IMR-90 (cell line): ENCODE measurements at regions of chr1 and their contacts with region 1.

Region 1: GRCh38 chr1:246497331-246497915 is 9.7 kb downstream of the SMYD3 start:
- DNase-seq: peak; percentile 79
- ATAC-seq: peak; percentile 57
- H3K4me3 ChIP-seq: no peak overlapping the region
- H3K27ac ChIP-seq: no peak overlapping the region
- H3K4me1 ChIP-seq: peaks cover 6% of the 10 kb centered on the region
- H3K27me3 ChIP-seq: no peaks in the 10 kb centered on the region
- CTCF ChIP-seq: peak; percentile 82
- POLR2A ChIP-seq: no peak
- RAD21 ChIP-seq: peak; percentile 62

Region 2: DNA sequence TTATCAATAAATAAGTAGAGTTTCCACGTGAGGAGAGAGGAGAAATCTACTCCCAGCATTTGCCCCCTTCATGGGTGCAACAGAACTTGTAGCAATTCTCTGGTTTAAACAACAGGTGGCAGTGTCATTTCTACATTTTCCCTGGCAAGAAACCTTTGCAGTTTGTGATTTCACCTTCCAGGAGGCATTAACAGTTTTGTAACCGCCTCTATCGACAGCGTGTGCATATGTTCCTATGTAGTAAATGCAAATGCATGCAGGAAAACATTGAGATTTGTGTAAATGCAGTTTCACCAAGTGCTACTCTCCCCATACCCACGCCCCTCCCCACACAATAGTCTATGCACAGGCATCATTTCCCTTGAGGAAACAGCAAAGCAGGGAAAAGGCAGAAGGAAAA is 485.1 kb before region 1 on chr1:
- CTCF ChIA-PET with region 1: interaction called, 8 read pairs
- POLR2A ChIA-PET with region 1: no interaction called
- dilution Hi-C with region 1: no loop called
- in situ Hi-C with region 1: no loop called
- intact Hi-C with region 1: loop called (anchors 2 kb)
- DNase-seq: peak; percentile 51
- ATAC-seq: peak; percentile 53
- H3K4me3 ChIP-seq: no peak overlapping the region
- H3K27ac ChIP-seq: no peak overlapping the region
- H3K4me1 ChIP-seq: no peaks in the 10 kb centered on the region
- H3K27me3 ChIP-seq: no peaks in the 10 kb centered on the region
- CTCF ChIP-seq: peak; percentile 65
- POLR2A ChIP-seq: no peak
- RAD21 ChIP-seq: peak; percentile 68

Region 3: DNA sequence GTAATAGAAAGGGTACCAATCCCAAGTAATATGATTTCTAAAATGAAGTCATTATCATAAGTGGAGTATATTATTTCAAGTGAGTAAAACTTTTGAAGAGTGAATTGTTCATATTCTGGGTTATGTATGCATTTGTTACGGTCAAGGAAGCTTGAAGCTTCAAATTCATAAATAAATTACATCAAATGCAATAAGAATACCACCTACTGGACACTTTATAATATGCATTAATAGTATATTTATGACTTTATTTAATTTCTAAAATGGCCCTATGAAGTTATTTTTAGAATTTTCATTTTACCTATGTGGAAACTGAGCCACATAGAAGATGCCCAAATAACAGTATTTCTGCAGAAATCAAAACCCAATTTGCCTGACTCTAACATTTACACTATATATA is 251.0 kb before region 1 on chr1:
- CTCF ChIA-PET with region 1: no interaction called
- POLR2A ChIA-PET with region 1: interaction called, 10 read pairs
- dilution Hi-C with region 1: no loop called
- in situ Hi-C with region 1: no loop called
- intact Hi-C with region 1: no loop called
- DNase-seq: no peak
- ATAC-seq: no peak
- H3K4me3 ChIP-seq: no peak overlapping the region
- H3K27ac ChIP-seq: no peak overlapping the region
- H3K4me1 ChIP-seq: no peaks in the 10 kb centered on the region
- H3K27me3 ChIP-seq: no peaks in the 10 kb centered on the region
- CTCF ChIP-seq: no peak; the same call in 1 of the 2 replicates
- POLR2A ChIP-seq: no peak
- RAD21 ChIP-seq: no peak

Region 4: GRCh38 chr1:246579818-246580217 is 82.4 kb after region 1 on chr1:
- CTCF ChIA-PET with region 1: no interaction called
- POLR2A ChIA-PET with region 1: no interaction called
- dilution Hi-C with region 1: no loop called
- in situ Hi-C with region 1: no loop called
- intact Hi-C with region 1: no loop called
- DNase-seq: no peak
- ATAC-seq: no peak
- H3K4me3 ChIP-seq: no peak overlapping the region
- H3K27ac ChIP-seq: no peak overlapping the region
- H3K4me1 ChIP-seq: peaks cover 16% of the 10 kb centered on the region
- H3K27me3 ChIP-seq: no peaks in the 10 kb centered on the region
- CTCF ChIP-seq: no peak
- POLR2A ChIP-seq: no peak
- RAD21 ChIP-seq: no peak

Region 5: GRCh38 chr1:246699095-246699735 is 201.8 kb after region 1 on chr1:
- CTCF ChIA-PET with region 1: interaction called, 4 read pairs
- POLR2A ChIA-PET with region 1: no interaction called
- dilution Hi-C with region 1: no loop called
- in situ Hi-C with region 1: no loop called
- intact Hi-C with region 1: loop called (anchors 1 kb)
- DNase-seq: peak; percentile 96
- ATAC-seq: peak; percentile 95
- H3K4me3 ChIP-seq: peak overlapping the region; percentile 15; the same call in 1 of the 2 replicates
- H3K27ac ChIP-seq: peak overlapping the region; percentile 33; the same call in 1 of the 2 replicates
- H3K4me1 ChIP-seq: no peaks in the 10 kb centered on the region
- H3K27me3 ChIP-seq: no peaks in the 10 kb centered on the region
- CTCF ChIP-seq: peak; percentile 97
- POLR2A ChIP-seq: peak; percentile 32; the same call in 1 of the 2 replicates
- RAD21 ChIP-seq: peak; percentile 82

Region 6: GRCh38 chr1:246753670-246754535 is 256.5 kb after region 1 on chr1:
- CTCF ChIA-PET with region 1: interaction called, 5 read pairs
- POLR2A ChIA-PET with region 1: no interaction called
- dilution Hi-C with region 1: no loop called
- in situ Hi-C with region 1: no loop called
- intact Hi-C with region 1: loop called (anchors 1 kb)
- DNase-seq: peak; percentile 68
- ATAC-seq: peak; percentile 100
- H3K4me3 ChIP-seq: no peak overlapping the region
- H3K27ac ChIP-seq: no peak overlapping the region
- H3K4me1 ChIP-seq: no peaks in the 10 kb centered on the region
- H3K27me3 ChIP-seq: no peaks in the 10 kb centered on the region
- CTCF ChIP-seq: peak; percentile 83
- POLR2A ChIP-seq: no peak
- RAD21 ChIP-seq: peak; percentile 90